ENCODE measurements at regions of chr3 and their contacts with region 1.

Region 1: GRCh38 chr3:125644036-125645010 is 49.0 kb upstream of the OSBPL11 start:
- DNase-seq: peak in 1 of 2 experiments; percentile 38
- H3K4me3 ChIP-seq: no peak overlapping the region
- H3K27ac ChIP-seq: no peak overlapping the region
- H3K4me1 ChIP-seq: peaks cover 28% of the 10 kb centered on the region
- H3K27me3 ChIP-seq: no peaks in the 10 kb centered on the region
- CTCF ChIP-seq: no peak

Region 2: GRCh38 chr3:124142389-124142970 is 1501.8 kb before region 1 on chr3:
- CTCF ChIA-PET with region 1: no interaction called
- POLR2A ChIA-PET with region 1: no interaction called
- intact Hi-C with region 1: no loop called
- DNase-seq: no peak
- H3K4me3 ChIP-seq: no peak overlapping the region
- H3K27ac ChIP-seq: no peak overlapping the region
- H3K4me1 ChIP-seq: no peaks in the 10 kb centered on the region
- H3K27me3 ChIP-seq: peaks cover 46% of the 10 kb centered on the region
- CTCF ChIP-seq: no peak

Region 3: DNA sequence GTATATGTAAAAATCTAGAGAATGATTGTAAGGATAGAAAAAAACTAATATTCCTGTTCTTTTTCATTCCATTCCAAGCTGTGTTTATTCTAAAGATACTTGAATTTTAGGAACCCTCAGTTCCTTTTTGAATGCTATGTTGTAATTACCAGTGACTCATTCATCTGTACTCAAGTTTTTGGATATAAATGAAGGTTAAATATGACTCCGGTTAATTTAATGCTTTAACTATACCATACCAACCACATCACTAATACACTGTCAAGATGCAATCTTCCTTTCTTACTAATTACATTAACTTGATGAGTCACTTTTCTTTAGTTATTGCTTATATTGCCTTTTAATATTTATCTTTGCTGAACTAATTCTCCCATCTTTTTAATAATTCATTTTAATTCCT is 200.4 kb before region 1 on chr3:
- CTCF ChIA-PET with region 1: no interaction called
- POLR2A ChIA-PET with region 1: no interaction called
- intact Hi-C with region 1: no loop called
- DNase-seq: no peak
- H3K4me3 ChIP-seq: no peak overlapping the region
- H3K27ac ChIP-seq: no peak overlapping the region
- H3K4me1 ChIP-seq: peaks cover 7% of the 10 kb centered on the region
- H3K27me3 ChIP-seq: no peaks in the 10 kb centered on the region
- CTCF ChIP-seq: no peak

Region 4: GRCh38 chr3:125632597-125632996 is 11.7 kb before region 1 on chr3:
- CTCF ChIA-PET with region 1: no interaction called
- POLR2A ChIA-PET with region 1: interaction called, 5 read pairs
- intact Hi-C with region 1: loop called (anchors 2 kb)
- DNase-seq: no peak
- H3K4me3 ChIP-seq: no peak overlapping the region
- H3K27ac ChIP-seq: peak overlapping the region; percentile 64
- H3K4me1 ChIP-seq: peaks cover 19% of the 10 kb centered on the region
- H3K27me3 ChIP-seq: no peaks in the 10 kb centered on the region
- CTCF ChIP-seq: no peak

Region 5: DNA sequence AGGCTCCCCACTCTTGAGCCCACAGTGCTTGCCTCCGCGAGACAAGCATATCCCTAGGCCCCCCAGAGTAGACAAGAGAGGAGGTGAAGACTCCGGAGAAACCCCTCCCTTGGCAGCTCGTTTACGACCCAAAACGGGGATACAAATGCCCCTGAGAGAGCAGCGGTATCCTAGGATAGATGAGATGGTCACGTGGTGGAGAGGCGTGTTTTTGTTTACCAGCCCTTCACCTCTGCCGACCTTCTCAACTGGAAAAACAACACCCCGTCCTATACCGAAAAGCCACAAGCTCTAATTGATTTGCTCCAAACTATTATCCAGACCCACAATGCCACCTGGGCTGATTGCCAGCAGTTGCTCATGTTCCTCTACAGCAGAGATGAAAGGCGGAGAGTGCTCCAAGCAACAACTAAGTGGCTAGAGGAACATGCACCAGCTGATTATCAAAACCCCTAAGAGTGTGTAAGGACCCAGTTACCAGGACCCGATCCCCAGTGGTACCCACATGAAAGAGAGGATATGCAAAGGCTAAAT is 50.5 kb after region 1 on chr3:
- CTCF ChIA-PET with region 1: interaction called, 10 read pairs
- POLR2A ChIA-PET with region 1: no interaction called
- intact Hi-C with region 1: no loop called
- DNase-seq: no peak
- H3K4me3 ChIP-seq: no peak overlapping the region
- H3K27ac ChIP-seq: no peak overlapping the region
- H3K4me1 ChIP-seq: peaks cover 12% of the 10 kb centered on the region
- H3K27me3 ChIP-seq: no peaks in the 10 kb centered on the region
- CTCF ChIP-seq: no peak